ENCODE measurements at regions of chr12 and their contacts with region 1.

Region 1: DNA sequence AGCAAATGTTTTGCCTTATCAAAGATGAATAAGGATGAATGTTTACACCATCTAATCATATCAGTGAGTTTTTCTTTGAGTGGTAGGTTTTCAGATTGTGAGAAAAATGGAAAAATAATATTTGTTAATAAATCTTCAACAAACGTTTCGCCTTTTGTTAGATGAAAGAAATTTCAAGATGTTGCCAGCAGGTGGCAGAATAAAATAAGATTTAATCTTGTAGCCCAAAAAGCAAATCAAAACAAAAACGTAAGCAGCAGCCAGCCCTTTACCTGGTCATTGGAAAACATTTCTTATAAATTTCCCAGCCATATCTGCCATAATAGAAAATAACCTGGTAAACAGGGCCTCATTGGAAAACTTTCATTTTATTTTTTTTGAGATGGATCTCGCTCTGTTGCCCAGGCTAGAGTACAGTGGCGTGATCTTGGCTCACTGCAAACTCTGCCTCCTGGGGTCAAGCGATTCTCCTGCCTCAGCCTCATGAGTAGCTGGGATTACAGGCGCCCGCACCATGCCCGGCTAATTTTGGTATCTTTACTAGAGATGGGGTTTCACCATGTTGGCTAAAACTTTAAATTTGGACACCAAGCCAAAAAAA is 15.4 kb upstream of the TMEM120B start:
- DNase-seq: no peak
- H3K4me3 ChIP-seq: no peak overlapping the region
- H3K27ac ChIP-seq: no peak overlapping the region
- H3K4me1 ChIP-seq: no peaks in the 10 kb centered on the region
- H3K27me3 ChIP-seq: no peaks in the 10 kb centered on the region
- CTCF ChIP-seq: peak; percentile 60 to 67 (median 65)
- POLR2A ChIP-seq: no peak

Region 2: GRCh38 chr12:121626087-121626852 is 70.9 kb before region 1 on chr12 and contains the start of gene ORAI1:
- intact Hi-C with region 1: no loop called
- DNase-seq: peak; percentile 99
- H3K4me3 ChIP-seq: peak within 1 kb of the TSS; percentile 66 to 69
- H3K27ac ChIP-seq: peak within 1 kb of the TSS; percentile 90 to 93
- H3K4me1 ChIP-seq: peaks cover 43% of the 10 kb centered on the region
- H3K27me3 ChIP-seq: no peaks in the 10 kb centered on the region
- CTCF ChIP-seq: peak in 2 of 3 experiments; percentile 10 to 26
- POLR2A ChIP-seq: peak; percentile 82
- total RNA-seq, gene ORAI1: 46.8 to 70.7 TPM

Region 3: GRCh38 chr12:121765573-121765972 is 68.4 kb after region 1 on chr12:
- intact Hi-C with region 1: loop called (anchors 5 kb)
- DNase-seq: no peak
- H3K4me3 ChIP-seq: no peak overlapping the region
- H3K27ac ChIP-seq: no peak overlapping the region
- H3K4me1 ChIP-seq: peaks cover 8% of the 10 kb centered on the region
- H3K27me3 ChIP-seq: no peaks in the 10 kb centered on the region
- CTCF ChIP-seq: no peak
- POLR2A ChIP-seq: no peak

Region 4: DNA sequence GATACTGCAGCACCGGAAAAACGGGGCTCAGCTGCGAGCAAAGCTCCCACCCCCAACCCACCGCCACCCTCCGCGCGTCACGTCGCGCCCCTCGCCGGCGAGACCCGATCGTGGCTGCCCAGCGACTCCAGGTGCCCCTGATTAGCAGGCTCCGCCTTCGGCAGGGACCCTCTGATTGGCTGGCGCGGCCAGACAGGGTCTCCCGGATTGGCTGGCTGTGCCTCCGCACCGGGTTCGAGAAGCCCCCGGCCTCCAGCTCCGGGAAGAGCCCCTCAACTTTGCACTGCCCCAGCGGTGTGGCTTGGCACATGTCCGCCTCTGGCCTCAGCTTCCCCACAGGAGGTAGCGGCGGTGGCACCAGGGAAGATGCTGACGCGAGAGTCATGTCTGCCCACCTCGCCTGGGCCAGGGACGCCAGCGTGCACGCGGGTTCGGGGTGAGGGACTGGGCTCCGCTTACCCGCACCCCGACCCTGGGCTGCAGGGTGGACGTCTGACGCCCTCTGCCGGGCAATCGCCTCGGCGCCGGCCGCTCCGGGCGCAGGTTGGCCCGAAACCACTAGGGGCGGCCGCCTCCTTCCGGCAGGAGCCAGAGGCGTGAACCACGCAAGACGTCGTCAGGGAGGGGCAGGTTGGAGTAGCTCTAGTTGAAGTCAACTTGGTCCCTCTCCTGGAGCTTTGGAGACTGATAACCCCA is 96.8 kb after region 1 on chr12:
- intact Hi-C with region 1: loop called (anchors 5 kb)
- DNase-seq: peak; percentile 91
- H3K4me3 ChIP-seq: peak overlapping the region; percentile 53 to 59
- H3K27ac ChIP-seq: peak overlapping the region in 1 of 2 donors; percentile 78
- H3K4me1 ChIP-seq: peaks cover 55% of the 10 kb centered on the region
- H3K27me3 ChIP-seq: no peaks in the 10 kb centered on the region
- CTCF ChIP-seq: peak; percentile 97 to 100 (median 99)
- POLR2A ChIP-seq: no peak

Region 5: DNA sequence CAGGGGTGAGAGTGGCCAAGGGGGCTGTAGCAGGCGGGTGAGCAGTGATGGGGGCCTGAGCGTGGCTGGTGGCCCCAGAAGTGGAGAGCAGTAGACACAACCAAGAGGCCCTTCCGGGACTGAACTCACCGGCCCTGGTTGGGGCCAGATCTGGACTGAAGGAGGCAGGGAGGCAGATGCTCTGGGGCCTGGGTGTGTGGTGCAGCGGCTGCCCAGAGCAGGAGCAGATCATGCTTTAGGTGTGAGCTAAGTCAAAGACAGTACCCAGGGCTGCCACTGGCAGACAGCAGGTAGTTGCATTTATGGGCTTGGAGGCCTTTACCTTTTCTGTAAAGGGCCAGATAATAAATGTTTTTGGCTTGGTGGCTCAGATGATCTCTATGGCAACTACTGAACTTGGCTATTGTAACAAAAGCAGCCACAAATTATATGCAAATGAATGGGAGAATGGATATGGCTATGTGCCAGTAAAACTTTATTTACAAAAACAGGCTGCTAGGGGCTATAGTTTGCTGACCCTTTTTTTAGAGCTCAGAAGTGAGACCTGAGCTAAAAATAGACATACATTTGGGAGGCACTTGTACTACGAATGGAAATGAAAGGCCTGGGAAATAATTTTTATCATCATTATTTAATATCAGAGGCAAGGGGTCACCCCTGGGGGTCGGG is 132.2 kb after region 1 on chr12:
- intact Hi-C with region 1: no loop called
- DNase-seq: no peak
- H3K4me3 ChIP-seq: no peak overlapping the region
- H3K27ac ChIP-seq: no peak overlapping the region
- H3K4me1 ChIP-seq: no peaks in the 10 kb centered on the region
- H3K27me3 ChIP-seq: no peaks in the 10 kb centered on the region
- CTCF ChIP-seq: no peak
- POLR2A ChIP-seq: no peak

Measured in testis (tissue), 5 donors.